GM13976 (cell line): ENCODE measurements at regions of chr15 and their contacts with region 1.

Region 1: GRCh38 chr15:39553947-39554693 is 26.8 kb upstream of the THBS1 start:
- DNase-seq: no peak
- CTCF ChIP-seq: no peak

Region 2: GRCh38 chr15:39312984-39313383 is 241.1 kb before region 1 on chr15:
- in situ Hi-C with region 1: loop called (anchors 25 kb)
- DNase-seq: no peak
- CTCF ChIP-seq: peak; percentile 7

Region 3: DNA sequence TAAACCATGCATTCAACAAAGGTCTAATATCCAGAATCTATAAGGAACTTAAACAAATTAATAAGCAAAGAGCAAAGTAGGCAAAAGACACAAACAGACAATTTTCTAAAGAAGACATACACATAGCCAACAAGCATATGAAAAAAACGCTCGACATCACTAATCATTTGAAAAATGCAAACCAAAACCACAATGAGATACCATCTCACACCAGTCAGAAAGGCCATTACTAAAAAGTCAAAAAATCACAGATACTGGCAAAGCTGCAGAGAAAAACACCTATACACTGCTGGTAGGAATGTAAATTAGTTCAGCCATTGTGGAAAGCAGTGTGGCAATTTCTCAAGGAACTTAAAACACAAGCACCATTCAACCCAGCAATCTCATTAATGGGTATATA is 174.7 kb after region 1 on chr15:
- in situ Hi-C with region 1: no loop called
- DNase-seq: no peak
- CTCF ChIP-seq: no peak